ENCODE measurements at regions of chr7 and their contacts with region 1.

Region 1: DNA sequence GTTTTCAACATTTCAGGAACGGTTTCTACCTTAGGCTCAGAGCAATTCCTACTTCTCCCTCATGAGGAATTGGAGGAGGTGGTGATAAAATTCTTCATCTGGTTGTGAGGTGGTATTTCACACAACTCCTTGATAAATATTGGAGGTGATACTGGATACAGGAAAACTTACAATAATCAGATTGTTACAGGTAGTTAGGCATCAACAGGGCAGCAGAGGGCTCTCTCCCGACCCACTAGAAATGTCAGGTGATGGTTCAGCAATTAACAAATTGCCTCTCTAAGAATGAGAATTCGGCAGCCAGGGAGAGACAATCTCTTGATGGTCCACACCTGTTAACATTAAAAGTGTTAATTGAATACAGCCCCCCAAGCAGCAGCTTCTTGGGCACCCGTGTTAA is 22.6 kb downstream of the ZNF786 start:
- DNase-seq: no peak
- H3K4me3 Mint-ChIP-seq: no peak overlapping the region
- H3K27ac Mint-ChIP-seq: no peak overlapping the region
- H3K4me1 Mint-ChIP-seq: peaks cover 5% of the 10 kb centered on the region
- H3K27me3 Mint-ChIP-seq: no peaks in the 10 kb centered on the region

Region 2: DNA sequence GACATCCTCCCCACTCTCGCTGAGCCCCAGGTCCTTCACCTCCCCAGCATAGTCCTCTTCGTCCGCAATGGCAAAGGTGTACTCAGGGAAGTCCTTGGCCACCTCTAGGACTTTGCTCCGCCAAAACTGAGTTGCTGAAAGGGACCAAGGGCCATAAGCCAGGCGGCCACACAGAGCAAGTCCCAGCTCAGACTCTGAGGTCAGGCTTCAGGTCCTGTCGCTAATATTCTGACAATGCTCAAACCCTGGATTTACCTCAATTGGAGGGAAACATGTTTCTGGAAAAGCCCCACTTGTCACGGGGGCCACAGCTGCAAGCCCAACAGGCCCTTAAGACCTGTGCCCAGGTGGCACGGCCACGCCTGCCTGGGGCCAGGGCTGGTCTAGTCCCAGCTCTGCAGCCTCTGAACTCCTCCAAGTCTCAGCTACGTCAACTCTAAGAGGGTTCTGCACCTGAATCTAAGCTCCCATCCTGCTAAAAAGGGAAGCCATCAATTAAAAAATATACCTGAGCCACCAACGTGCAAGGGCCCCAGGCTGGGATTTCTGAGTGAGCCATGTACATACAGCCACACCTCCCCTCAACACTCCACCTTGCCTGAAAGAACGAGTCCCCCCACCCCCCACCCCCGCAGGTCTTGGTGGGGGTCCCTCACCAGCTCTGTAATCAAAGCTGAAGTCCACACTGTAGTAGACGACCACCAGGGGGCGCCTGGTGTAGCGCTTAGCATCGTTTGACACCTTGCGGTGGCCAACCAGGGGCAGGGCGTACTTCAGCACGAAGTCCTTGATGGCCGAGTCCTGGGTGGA is 62.4 kb before region 1 on chr7:
- intact Hi-C with region 1: loop called (anchors 1 kb)
- DNase-seq: peak; percentile 60
- H3K4me3 Mint-ChIP-seq: no peak overlapping the region
- H3K27ac Mint-ChIP-seq: no peak overlapping the region
- H3K4me1 Mint-ChIP-seq: peaks cover 2% of the 10 kb centered on the region
- H3K27me3 Mint-ChIP-seq: no peaks in the 10 kb centered on the region

Measured in activated T-helper 2 cell treated with anti-CD3 and anti-CD28 coated beads, Interferon-gamma antibody, Interleukin-2, Interleukin-4, amounts not matched to agents 10 μg/mL and 5 μg/mL and 100 μg/mL, durations not matched to agents 14 hours and 24 hours and 36 hours (primary cell).